Stomach (tissue), 19 donors: ENCODE measurements at regions of chr17 and their contacts with region 1.

Region 1: GRCh38 chr17:16521070-16521727 is 29.2 kb upstream of the LRRC75A start:
- DNase-seq: peak; percentile 77 to 95
- H3K4me3 ChIP-seq: no peak overlapping the region
- H3K27ac ChIP-seq: no peak overlapping the region
- H3K4me1 ChIP-seq: peaks cover 0 to 15% (median 8%) of the 10 kb centered on the region in 4 donors
- H3K27me3 ChIP-seq: peaks cover 0 to 18% (median 4%) of the 10 kb centered on the region in 3 donors
- CTCF ChIP-seq: peak in 6 of 7 experiments; percentile 14 to 97 (median 90)
- EP300 ChIP-seq: no peak
- POLR2A ChIP-seq: no peak

Region 2: GRCh38 chr17:16363749-16364536 is 157.3 kb before region 1 on chr17:
- intact Hi-C with region 1: loop called (anchors 10 kb)
- DNase-seq: peak; percentile 84 to 89
- H3K4me3 ChIP-seq: no peak overlapping the region
- H3K27ac ChIP-seq: peak overlapping the region in 3 of 5 donors; percentile 4 to 22 (median 18)
- H3K4me1 ChIP-seq: peaks cover 0 to 9% (median 3%) of the 10 kb centered on the region in 4 donors
- H3K27me3 ChIP-seq: no peaks in the 10 kb centered on the region
- CTCF ChIP-seq: peak in 5 of 7 experiments; percentile 82 to 98 (median 93)
- EP300 ChIP-seq: no peak
- POLR2A ChIP-seq: no peak

Region 3: GRCh38 chr17:16456742-16457316 is 64.4 kb before region 1 on chr17:
- intact Hi-C with region 1: loop called (anchors 5 kb)
- DNase-seq: no peak
- H3K4me3 ChIP-seq: no peak overlapping the region
- H3K27ac ChIP-seq: no peak overlapping the region
- H3K4me1 ChIP-seq: peaks cover 0 to 20% (median 0%) of the 10 kb centered on the region in 4 donors
- H3K27me3 ChIP-seq: no peaks in the 10 kb centered on the region
- CTCF ChIP-seq: no peak
- EP300 ChIP-seq: no peak
- POLR2A ChIP-seq: no peak

Region 4: GRCh38 chr17:16584273-16584995 is 63.2 kb after region 1 on chr17:
- intact Hi-C with region 1: no loop called
- DNase-seq: peak; percentile 94 to 97
- H3K4me3 ChIP-seq: peak overlapping the region; percentile 31 to 47 (median 38)
- H3K27ac ChIP-seq: peak overlapping the region in 1 of 5 donors; percentile 44
- H3K4me1 ChIP-seq: peaks cover 0 to 22% (median 17%) of the 10 kb centered on the region in 4 donors
- H3K27me3 ChIP-seq: no peaks in the 10 kb centered on the region
- CTCF ChIP-seq: peak in 5 of 7 experiments; percentile 67 to 90 (median 84)
- EP300 ChIP-seq: no peak
- POLR2A ChIP-seq: no peak